ENCODE measurements at regions of chr9 and their contacts with region 1.

Region 1: GRCh38 chr9:33415501-33416038 is 13.2 kb upstream of the AQP7 start:
- DNase-seq: peak; percentile 93
- ATAC-seq: peak; percentile 95
- H3K4me3 Mint-ChIP-seq: peak overlapping the region; percentile 72
- H3K27ac Mint-ChIP-seq: peak overlapping the region; percentile 94
- H3K4me1 Mint-ChIP-seq: peaks cover 32% of the 10 kb centered on the region
- H3K27me3 Mint-ChIP-seq: peaks cover 5% of the 10 kb centered on the region

Region 2: GRCh38 chr9:33290247-33291030 is 125.1 kb before region 1 on chr9 and contains the start of gene NFX1:
- POLR2A ChIA-PET with region 1: interaction called, 20 read pairs
- DNase-seq: peak; percentile 97
- ATAC-seq: peak; percentile 89
- H3K4me3 Mint-ChIP-seq: peak within 1 kb of the TSS; percentile 93
- H3K27ac Mint-ChIP-seq: peak within 1 kb of the TSS; percentile 98
- H3K4me1 Mint-ChIP-seq: peaks cover 45% of the 10 kb centered on the region
- H3K27me3 Mint-ChIP-seq: no peaks in the 10 kb centered on the region
- total RNA-seq, gene NFX1: 47.4 to 48.2 TPM

Region 3: GRCh38 chr9:33381231-33381791 is 34.3 kb before region 1 on chr9:
- POLR2A ChIA-PET with region 1: no interaction called
- DNase-seq: no peak
- ATAC-seq: no peak
- H3K4me3 Mint-ChIP-seq: no peak overlapping the region
- H3K27ac Mint-ChIP-seq: no peak overlapping the region
- H3K4me1 Mint-ChIP-seq: no peaks in the 10 kb centered on the region
- H3K27me3 Mint-ChIP-seq: peaks cover 2% of the 10 kb centered on the region

Region 4: GRCh38 chr9:33446946-33447798 is 31.6 kb after region 1 on chr9 and contains the start of gene AQP3:
- POLR2A ChIA-PET with region 1: interaction called, 31 read pairs
- DNase-seq: peak; percentile 81
- ATAC-seq: peak; percentile 74
- H3K4me3 Mint-ChIP-seq: peak within 1 kb of the TSS; percentile 91
- H3K27ac Mint-ChIP-seq: peak within 1 kb of the TSS; percentile 95
- H3K4me1 Mint-ChIP-seq: peaks cover 35% of the 10 kb centered on the region
- H3K27me3 Mint-ChIP-seq: no peaks in the 10 kb centered on the region
- total RNA-seq, gene AQP3: 29.1 to 32.0 TPM

Region 5: DNA sequence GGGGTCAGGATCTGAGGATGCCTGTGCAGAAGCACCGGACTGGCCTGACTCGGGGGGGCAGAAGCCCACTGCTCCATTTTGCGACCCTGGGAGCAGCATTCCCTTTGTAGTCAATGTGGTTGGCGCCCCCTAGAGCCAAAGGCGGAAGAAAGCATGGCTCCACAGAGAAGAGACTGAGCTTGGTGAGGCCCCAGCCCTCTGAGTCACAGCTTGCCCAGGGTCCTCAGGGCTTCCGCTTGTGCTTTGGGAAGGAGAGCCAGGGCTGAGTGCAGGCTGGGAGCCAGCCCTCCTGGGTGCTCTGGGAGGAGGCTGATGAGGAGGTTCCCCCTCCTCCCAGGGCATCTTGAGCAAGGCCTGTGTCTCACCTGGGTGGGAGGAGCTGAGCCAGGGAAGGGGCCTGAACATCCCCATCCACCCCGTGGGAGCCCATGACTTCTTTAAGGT is 37.3 kb after region 1 on chr9:
- POLR2A ChIA-PET with region 1: interaction called, 31 read pairs
- DNase-seq: peak; percentile 62
- ATAC-seq: peak; percentile 75
- H3K4me3 Mint-ChIP-seq: peak overlapping the region; percentile 7
- H3K27ac Mint-ChIP-seq: peak overlapping the region; percentile 83
- H3K4me1 Mint-ChIP-seq: peaks cover 52% of the 10 kb centered on the region
- H3K27me3 Mint-ChIP-seq: no peaks in the 10 kb centered on the region

Region 6: GRCh38 chr9:33473643-33474352 is 58.2 kb after region 1 on chr9 and contains the start of gene NOL6:
- POLR2A ChIA-PET with region 1: interaction called, 12 read pairs
- DNase-seq: peak; percentile 94
- ATAC-seq: peak; percentile 99
- H3K4me3 Mint-ChIP-seq: peak within 1 kb of the TSS; percentile 96
- H3K27ac Mint-ChIP-seq: peak within 1 kb of the TSS; percentile 93
- H3K4me1 Mint-ChIP-seq: peaks cover 19% of the 10 kb centered on the region
- H3K27me3 Mint-ChIP-seq: no peaks in the 10 kb centered on the region
- total RNA-seq, gene NOL6: 30.1 to 33.2 TPM

Region 7: GRCh38 chr9:33676746-33677505 is 261.4 kb after region 1 on chr9:
- POLR2A ChIA-PET with region 1: no interaction called
- DNase-seq: peak; percentile 44
- ATAC-seq: peak; percentile 60
- H3K4me3 Mint-ChIP-seq: peak overlapping the region; percentile 93
- H3K27ac Mint-ChIP-seq: peak overlapping the region; percentile 37
- H3K4me1 Mint-ChIP-seq: peaks cover 9% of the 10 kb centered on the region
- H3K27me3 Mint-ChIP-seq: peaks cover 71% of the 10 kb centered on the region

Measured in activated naive CD8-positive, alpha-beta T cell treated with anti-CD3 and anti-CD28 coated beads, Interleukin-2, amount 10 ng/mL, durations not matched to agents 7 days and 5 days (primary cell).